ENCODE measurements at regions of chr7 and their contacts with region 1.

Region 1: GRCh38 chr7:30564243-30564892 is 30.3 kb upstream of the GARS1 start:
- DNase-seq: peak; percentile 84
- H3K4me3 ChIP-seq: no peak overlapping the region
- H3K27ac ChIP-seq: no peak overlapping the region
- H3K4me1 ChIP-seq: no peaks in the 10 kb centered on the region
- H3K27me3 ChIP-seq: no peaks in the 10 kb centered on the region
- CTCF ChIP-seq: peak; percentile 78 to 93 (median 81)
- EP300 ChIP-seq: no peak
- POLR2A ChIP-seq: no peak

Region 2: GRCh38 chr7:30252885-30253795 is 311.2 kb before region 1 on chr7:
- in situ Hi-C with region 1: loop called in 1 of 4 experiments (anchors 25 kb)
- intact Hi-C with region 1: no loop called
- DNase-seq: peak; percentile 62
- H3K4me3 ChIP-seq: no peak overlapping the region
- H3K27ac ChIP-seq: peak overlapping the region; percentile 10 to 80 (median 69)
- H3K4me1 ChIP-seq: peaks cover 0 to 38% (median 30%) of the 10 kb centered on the region in 4 donors
- H3K27me3 ChIP-seq: no peaks in the 10 kb centered on the region
- CTCF ChIP-seq: no peak
- EP300 ChIP-seq: no peak
- POLR2A ChIP-seq: no peak

Region 3: GRCh38 chr7:30276203-30276900 is 288.0 kb before region 1 on chr7:
- in situ Hi-C with region 1: loop called in 1 of 4 experiments (anchors 25 kb)
- intact Hi-C with region 1: loop called (anchors 5 kb)
- DNase-seq: peak; percentile 57
- H3K4me3 ChIP-seq: no peak overlapping the region
- H3K27ac ChIP-seq: no peak overlapping the region
- H3K4me1 ChIP-seq: peaks cover 0 to 25% (median 0%) of the 10 kb centered on the region in 4 donors
- H3K27me3 ChIP-seq: no peaks in the 10 kb centered on the region
- CTCF ChIP-seq: peak; percentile 58 to 71 (median 63)
- EP300 ChIP-seq: no peak
- POLR2A ChIP-seq: no peak

Region 4: GRCh38 chr7:30330134-30331111 is 233.9 kb before region 1 on chr7:
- in situ Hi-C with region 1: no loop called
- intact Hi-C with region 1: no loop called
- DNase-seq: no peak
- H3K4me3 ChIP-seq: peak overlapping the region in 1 of 4 donors; percentile 11
- H3K27ac ChIP-seq: peak overlapping the region; percentile 42 to 57 (median 54)
- H3K4me1 ChIP-seq: peaks cover 16 to 43% (median 36%) of the 10 kb centered on the region in 4 donors
- H3K27me3 ChIP-seq: no peaks in the 10 kb centered on the region
- CTCF ChIP-seq: no peak
- EP300 ChIP-seq: no peak
- POLR2A ChIP-seq: no peak